AG04450 (cell line): ENCODE measurements at regions of chr1 and their contacts with region 1.

Region 1: DNA sequence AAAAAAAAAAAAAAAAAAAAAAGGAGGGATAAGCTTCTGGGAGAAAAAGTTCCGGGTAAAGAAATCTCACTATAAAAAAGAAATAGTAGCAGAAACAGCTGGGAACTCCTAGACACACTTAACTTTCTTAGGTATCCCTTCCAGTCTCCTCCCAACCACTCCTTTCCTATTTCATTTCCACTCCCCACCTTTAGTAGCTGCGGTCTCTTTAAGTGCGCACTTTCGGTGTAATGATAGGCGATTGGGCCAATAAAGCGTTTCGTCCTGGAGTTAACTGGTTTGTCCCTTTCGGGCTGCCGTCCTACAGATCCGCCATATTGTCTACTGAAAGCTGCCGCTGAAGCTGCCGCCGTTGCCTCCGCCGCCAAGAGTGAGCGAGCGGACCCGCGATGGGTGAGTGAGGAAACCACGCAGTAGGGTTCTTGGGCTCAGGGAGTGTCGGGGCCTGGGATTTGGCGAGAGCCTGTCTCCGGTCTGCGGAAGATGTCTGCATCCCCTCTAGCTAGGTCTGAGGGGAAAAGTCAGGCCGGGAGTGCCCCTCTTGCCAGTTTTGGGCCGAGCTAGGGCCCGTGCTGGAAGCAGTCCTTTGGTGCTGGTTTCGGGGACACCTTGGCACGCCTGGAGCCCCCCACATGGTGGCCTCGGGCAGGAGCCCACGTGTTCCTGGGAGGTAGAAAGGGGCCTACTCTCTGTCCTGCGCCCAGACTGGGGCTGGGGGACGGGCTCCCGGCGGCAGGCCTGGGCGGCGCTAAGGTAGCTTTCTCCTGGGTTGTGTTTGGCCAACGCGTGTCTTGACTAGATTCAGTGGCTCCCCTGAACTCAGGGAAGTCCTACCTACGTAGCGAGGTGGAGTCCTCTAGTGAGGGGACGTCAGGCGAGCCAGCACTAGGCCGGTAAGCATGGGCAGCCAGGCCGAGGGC is at the start of gene KPNA6:
- DNase-seq: peak; percentile 92
- H3K4me3 ChIP-seq: peak within 1 kb of the TSS; percentile 98
- H3K27ac ChIP-seq: peak within 1 kb of the TSS; percentile 89
- H3K27me3 ChIP-seq: no peaks in the 10 kb centered on the region
- CTCF ChIP-seq: no peak
- polyA plus RNA-seq, gene KPNA6: 45.9 and 54.4 TPM in 2 replicates

Region 2: GRCh38 chr1:31891280-31891679 is 216.7 kb before region 1 on chr1:
- CTCF ChIA-PET with region 1: no interaction called
- POLR2A ChIA-PET with region 1: no interaction called
- DNase-seq: no peak
- H3K4me3 ChIP-seq: no peak overlapping the region
- H3K27ac ChIP-seq: no peak overlapping the region
- H3K27me3 ChIP-seq: no peaks in the 10 kb centered on the region
- CTCF ChIP-seq: no peak

Region 3: DNA sequence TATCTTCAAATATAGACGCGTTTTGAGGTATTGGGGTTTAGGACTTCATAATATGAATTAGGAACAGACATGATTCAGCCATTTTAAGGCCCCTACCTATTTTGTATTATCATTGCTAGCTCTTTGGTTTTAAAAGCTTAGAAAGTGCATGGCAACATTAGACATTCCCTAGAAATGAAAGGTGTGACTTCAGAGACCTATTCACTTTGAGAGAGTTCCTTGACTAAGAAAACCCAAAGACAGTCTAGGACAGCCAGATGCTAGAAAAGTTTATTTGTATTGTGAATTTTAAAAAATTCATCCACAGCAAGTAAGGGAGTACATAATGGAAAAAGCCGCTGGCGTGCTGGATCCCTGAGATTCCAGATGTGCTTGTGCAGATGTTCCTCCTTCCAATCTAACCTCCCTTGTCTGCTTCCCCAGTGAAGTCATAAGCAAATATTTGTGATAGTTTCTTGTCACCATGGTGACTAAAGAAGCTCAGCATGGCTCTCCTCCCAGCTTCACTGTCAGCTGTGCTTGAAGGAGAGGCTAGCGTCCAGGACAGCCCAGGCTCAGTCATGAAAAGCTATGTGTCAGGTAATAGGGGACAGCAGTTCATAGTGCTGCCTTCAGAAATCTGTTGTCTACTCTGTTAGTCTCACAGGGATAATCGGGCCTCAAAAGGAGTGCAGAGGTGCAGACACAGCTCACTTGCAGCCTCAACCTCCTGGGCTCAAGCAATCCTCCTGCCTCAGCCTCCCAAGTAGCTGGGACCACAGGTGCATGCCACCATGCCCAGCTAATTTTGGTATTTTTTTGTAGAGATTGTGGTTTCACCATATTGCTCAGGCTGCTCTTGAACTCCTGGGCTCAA is 34.7 kb after region 1 on chr1:
- CTCF ChIA-PET with region 1: interaction called, 4 read pairs
- POLR2A ChIA-PET with region 1: interaction called, 14 read pairs
- DNase-seq: peak; percentile 52
- H3K4me3 ChIP-seq: no peak overlapping the region
- H3K27ac ChIP-seq: peak overlapping the region; percentile 49
- H3K27me3 ChIP-seq: no peaks in the 10 kb centered on the region
- CTCF ChIP-seq: no peak

Region 4: GRCh38 chr1:32205401-32206370 is 97.7 kb after region 1 on chr1 and contains the start of gene IQCC:
- CTCF ChIA-PET with region 1: no interaction called
- POLR2A ChIA-PET with region 1: interaction called, 13 read pairs
- DNase-seq: no peak
- H3K4me3 ChIP-seq: peak within 1 kb of the TSS; percentile 80
- H3K27ac ChIP-seq: peak within 1 kb of the TSS; percentile 39
- H3K27me3 ChIP-seq: no peaks in the 10 kb centered on the region
- CTCF ChIP-seq: no peak
- polyA plus RNA-seq, gene IQCC: 1.2 and 1.3 TPM in 2 replicates